ENCODE measurements at regions of chr19 and their contacts with region 1.

Region 1: DNA sequence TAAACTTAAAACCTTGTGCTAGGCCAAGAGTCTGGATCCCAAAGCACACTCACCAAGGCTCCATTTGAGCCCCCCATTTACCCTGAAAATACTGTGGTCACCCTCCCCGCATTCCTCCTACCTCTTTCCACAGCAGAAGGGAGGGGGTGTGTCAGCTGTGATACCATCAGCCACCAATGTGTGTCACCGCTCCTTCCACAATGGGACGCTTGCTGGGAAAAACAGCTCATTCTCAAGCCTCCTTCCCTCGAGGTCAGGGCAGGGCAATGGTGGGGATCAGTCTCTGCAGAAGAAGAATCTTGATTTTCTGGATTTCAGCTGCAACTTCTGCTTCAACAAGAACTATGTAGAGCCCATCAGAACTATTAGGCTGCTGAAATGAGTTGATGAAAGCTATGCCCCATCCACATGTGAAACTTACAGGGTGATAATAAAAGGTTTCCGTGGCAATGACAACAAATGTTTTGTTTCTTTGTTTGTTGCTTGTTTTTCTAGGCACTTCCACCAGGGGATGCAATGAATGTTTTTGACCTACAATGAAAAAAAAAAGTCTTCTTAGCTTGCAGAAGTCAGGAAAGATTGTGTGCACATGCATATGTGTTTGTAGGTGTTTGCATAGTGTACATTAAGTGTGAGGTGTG is 26.4 kb upstream of the ZNF507 start:
- DNase-seq: peak; percentile 67
- ATAC-seq: peak; percentile 91
- H3K4me3 Mint-ChIP-seq: no peak overlapping the region
- H3K27ac Mint-ChIP-seq: peak overlapping the region; percentile 87
- H3K4me1 Mint-ChIP-seq: peaks cover 29% of the 10 kb centered on the region
- H3K27me3 Mint-ChIP-seq: no peaks in the 10 kb centered on the region
- CTCF ChIP-seq: no peak

Region 2: GRCh38 chr19:32339988-32340874 is 21.2 kb after region 1 on chr19:
- CTCF ChIA-PET with region 1: interaction called, 15 read pairs
- POLR2A ChIA-PET with region 1: no interaction called
- DNase-seq: peak; percentile 70
- ATAC-seq: peak; percentile 95
- H3K4me3 Mint-ChIP-seq: no peak overlapping the region
- H3K27ac Mint-ChIP-seq: no peak overlapping the region
- H3K4me1 Mint-ChIP-seq: no peaks in the 10 kb centered on the region
- H3K27me3 Mint-ChIP-seq: peaks cover 5% of the 10 kb centered on the region
- CTCF ChIP-seq: peak; percentile 24; the same call in 1 of the 2 replicates

Region 3: DNA sequence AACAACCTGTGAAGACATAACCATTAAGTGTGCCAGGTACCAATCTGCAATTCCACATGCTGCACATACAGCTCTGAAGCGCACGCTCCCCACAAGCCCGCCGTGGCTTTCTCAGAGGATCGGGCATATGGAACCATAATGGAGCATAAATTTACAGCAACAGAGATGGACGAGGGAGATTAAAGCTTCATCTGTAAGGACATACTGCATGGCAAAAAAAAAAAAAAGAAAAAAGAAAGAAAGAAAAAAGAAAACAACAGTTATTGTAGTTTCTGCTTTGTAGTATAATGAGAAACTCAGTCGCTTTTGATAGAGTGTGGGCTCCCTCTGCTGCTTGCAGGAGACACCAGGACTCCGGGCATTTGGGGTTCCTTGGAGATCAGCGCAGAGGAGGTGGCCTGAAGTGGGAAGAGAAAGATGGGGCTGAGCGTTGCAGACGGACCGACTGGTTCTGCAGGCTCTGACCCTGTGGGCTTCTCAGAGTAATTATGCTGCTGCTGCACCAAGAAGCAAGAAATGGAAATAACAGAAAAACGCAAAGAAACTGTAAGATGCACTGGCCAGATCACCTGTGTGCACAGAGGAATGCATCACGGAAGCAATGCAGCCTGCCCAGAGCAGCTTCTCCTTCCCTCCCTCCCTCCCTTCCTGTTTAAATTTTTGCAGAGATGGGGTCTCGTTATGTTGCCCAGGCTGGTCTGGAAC is 251.2 kb after region 1 on chr19:
- CTCF ChIA-PET with region 1: interaction called, 10 read pairs
- POLR2A ChIA-PET with region 1: no interaction called
- DNase-seq: peak; percentile 65
- ATAC-seq: peak; percentile 95
- H3K4me3 Mint-ChIP-seq: peak overlapping the region; percentile 50
- H3K27ac Mint-ChIP-seq: no peak overlapping the region
- H3K4me1 Mint-ChIP-seq: peaks cover 5% of the 10 kb centered on the region; the same call in 1 of the 2 replicates
- H3K27me3 Mint-ChIP-seq: peaks cover 2% of the 10 kb centered on the region; the same call in 1 of the 2 replicates
- CTCF ChIP-seq: no peak